ENCODE measurements at regions of chr16 and their contacts with region 1.

Region 1: DNA sequence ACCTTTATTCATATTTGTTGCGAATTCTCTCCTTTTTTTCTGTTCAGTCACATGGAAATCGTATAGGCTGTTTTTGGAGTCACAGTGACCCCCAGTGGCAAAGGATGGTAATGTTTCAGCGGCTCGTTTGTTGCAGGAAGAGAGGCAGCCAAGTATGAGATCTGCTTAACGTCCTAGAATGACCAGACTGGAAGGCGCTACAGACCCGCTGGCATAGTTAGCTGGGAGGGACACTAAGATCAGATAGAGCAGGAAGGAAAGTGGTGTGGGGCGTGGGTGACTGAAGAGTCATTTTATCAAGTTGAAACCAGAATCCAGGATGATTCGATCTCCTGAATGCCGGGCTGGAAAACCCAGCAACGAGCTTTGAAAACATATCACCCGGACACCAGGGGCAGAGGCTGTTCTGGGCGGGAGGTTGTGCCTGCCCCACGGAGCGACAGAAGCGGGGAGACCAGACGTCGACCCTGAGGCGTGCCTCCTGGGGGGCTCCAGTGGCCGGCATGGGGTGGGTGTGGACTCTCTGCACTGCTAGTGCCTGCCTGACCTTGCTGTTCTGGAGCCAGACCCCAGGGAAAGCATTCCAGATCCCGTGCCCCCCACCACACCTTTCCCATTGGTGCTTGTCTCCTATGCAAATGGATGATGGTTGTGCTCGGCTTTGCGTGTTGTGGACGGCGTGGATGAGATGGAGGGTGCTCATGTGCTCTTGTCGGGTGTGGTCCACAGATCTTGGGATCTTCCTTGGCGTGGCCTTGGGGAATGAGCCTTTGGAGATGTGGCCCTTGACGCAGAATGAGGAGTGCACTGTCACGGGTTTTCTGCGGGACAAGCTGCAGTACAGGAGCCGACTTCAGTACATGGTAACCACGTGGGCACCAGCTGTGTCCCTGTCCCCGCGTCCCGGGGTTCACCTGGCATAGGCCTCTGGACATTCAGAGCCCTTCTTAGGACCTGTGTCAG is 7.7 kb downstream of the IL34 start:
- DNase-seq: peak; percentile 54
- H3K4me3 ChIP-seq: peak overlapping the region; percentile 41
- H3K27ac ChIP-seq: no peak overlapping the region
- H3K27me3 ChIP-seq: no peaks in the 10 kb centered on the region
- CTCF ChIP-seq: peak; percentile 93

Region 2: GRCh38 chr16:70364399-70364798 is 289.7 kb before region 1 on chr16:
- CTCF ChIA-PET with region 1: interaction called, 16 read pairs
- POLR2A ChIA-PET with region 1: interaction called, 3 read pairs
- DNase-seq: no peak
- H3K4me3 ChIP-seq: no peak overlapping the region
- H3K27ac ChIP-seq: no peak overlapping the region
- H3K27me3 ChIP-seq: no peaks in the 10 kb centered on the region
- CTCF ChIP-seq: no peak

Region 3: GRCh38 chr16:70529051-70529777 is 124.9 kb before region 1 on chr16:
- CTCF ChIA-PET with region 1: interaction called, 48 read pairs
- POLR2A ChIA-PET with region 1: no interaction called
- DNase-seq: no peak
- H3K4me3 ChIP-seq: no peak overlapping the region; the same call in 1 of the 2 replicates
- H3K27ac ChIP-seq: peak overlapping the region; percentile 33
- H3K27me3 ChIP-seq: no peaks in the 10 kb centered on the region
- CTCF ChIP-seq: peak; percentile 61

Region 4: GRCh38 chr16:70540994-70541393 is 113.1 kb before region 1 on chr16:
- CTCF ChIA-PET with region 1: interaction called, 16 read pairs
- POLR2A ChIA-PET with region 1: no interaction called
- DNase-seq: no peak
- H3K4me3 ChIP-seq: no peak overlapping the region
- H3K27ac ChIP-seq: no peak overlapping the region
- H3K27me3 ChIP-seq: no peaks in the 10 kb centered on the region
- CTCF ChIP-seq: no peak

Region 5: GRCh38 chr16:70563636-70564035 is 90.5 kb before region 1 on chr16:
- CTCF ChIA-PET with region 1: interaction called, 13 read pairs
- POLR2A ChIA-PET with region 1: interaction called, 3 read pairs
- DNase-seq: no peak
- H3K4me3 ChIP-seq: no peak overlapping the region
- H3K27ac ChIP-seq: no peak overlapping the region
- H3K27me3 ChIP-seq: no peaks in the 10 kb centered on the region
- CTCF ChIP-seq: no peak

Region 6: DNA sequence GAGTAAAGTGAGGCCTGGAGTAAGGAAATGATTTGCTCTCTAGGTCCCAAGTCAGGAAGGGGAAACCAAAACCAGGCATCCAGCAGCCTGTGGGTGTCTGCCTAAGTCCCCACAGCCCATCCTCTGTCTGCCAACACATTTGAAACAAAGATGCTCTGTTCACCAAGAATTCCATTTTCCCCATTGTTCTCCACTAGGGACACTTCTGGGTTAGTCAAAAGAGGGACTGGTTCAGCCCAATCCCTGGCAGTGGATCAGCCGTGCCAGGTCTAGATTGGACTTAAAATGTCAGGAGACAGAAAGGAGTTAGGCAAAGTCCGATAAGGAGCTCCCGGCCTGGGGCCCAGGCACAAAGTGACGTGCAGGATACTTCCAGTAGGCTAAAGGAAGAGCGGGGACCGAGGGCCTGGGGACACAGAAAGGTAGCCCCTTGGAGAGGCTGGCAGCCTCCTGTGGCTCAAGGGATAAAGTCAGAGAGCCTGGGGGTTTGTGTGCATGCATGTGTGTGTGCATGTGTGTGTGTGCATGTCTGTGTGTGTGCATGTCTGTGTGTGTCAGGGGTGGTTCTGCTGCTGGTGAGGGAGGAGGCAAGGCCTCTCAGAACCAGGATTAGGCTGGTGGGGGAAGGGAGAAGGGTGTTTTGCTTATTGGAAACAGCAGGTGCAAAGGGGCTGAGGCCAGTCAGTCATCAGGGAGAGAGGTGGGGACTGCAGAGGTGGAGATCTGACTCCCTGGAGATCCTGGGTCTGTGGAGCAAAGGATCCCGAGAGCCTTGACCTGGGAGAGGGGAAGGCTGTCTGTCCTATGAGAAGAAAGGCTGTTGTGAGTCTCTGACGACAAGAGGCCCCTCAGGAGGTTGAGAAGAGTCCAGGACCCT is 49.4 kb before region 1 on chr16:
- CTCF ChIA-PET with region 1: no interaction called
- POLR2A ChIA-PET with region 1: no interaction called
- DNase-seq: no peak
- H3K4me3 ChIP-seq: no peak overlapping the region
- H3K27ac ChIP-seq: no peak overlapping the region
- H3K27me3 ChIP-seq: peaks cover 2% of the 10 kb centered on the region
- CTCF ChIP-seq: 0 out of 2 replicates have a peak, but pooled peaks have one; percentile 7

Region 7: GRCh38 chr16:70685938-70686375 is 31.9 kb after region 1 on chr16 and contains the start of gene MTSS2:
- CTCF ChIA-PET with region 1: no interaction called
- POLR2A ChIA-PET with region 1: no interaction called
- DNase-seq: peak; percentile 68
- H3K4me3 ChIP-seq: peak within 1 kb of the TSS; percentile 82
- H3K27ac ChIP-seq: peak within 1 kb of the TSS; percentile 52
- H3K27me3 ChIP-seq: no peaks in the 10 kb centered on the region
- CTCF ChIP-seq: no peak
- polyA plus RNA-seq, gene MTSS2: 57.9 and 80.1 TPM in 2 replicates

Region 8: GRCh38 chr16:70715055-70715858 is 61.2 kb after region 1 on chr16:
- CTCF ChIA-PET with region 1: no interaction called
- POLR2A ChIA-PET with region 1: no interaction called
- DNase-seq: peak; percentile 92
- H3K4me3 ChIP-seq: no peak overlapping the region
- H3K27ac ChIP-seq: peak overlapping the region; percentile 98
- H3K27me3 ChIP-seq: no peaks in the 10 kb centered on the region
- CTCF ChIP-seq: peak; percentile 20; the same call in 1 of the 2 replicates

Measured in AG04450 (cell line).